Activated B cell treated with CpG ODN at 0.5 μM for 24 hours (primary cell): ENCODE measurements at regions of chr5 and their contacts with region 1.

Region 1: DNA sequence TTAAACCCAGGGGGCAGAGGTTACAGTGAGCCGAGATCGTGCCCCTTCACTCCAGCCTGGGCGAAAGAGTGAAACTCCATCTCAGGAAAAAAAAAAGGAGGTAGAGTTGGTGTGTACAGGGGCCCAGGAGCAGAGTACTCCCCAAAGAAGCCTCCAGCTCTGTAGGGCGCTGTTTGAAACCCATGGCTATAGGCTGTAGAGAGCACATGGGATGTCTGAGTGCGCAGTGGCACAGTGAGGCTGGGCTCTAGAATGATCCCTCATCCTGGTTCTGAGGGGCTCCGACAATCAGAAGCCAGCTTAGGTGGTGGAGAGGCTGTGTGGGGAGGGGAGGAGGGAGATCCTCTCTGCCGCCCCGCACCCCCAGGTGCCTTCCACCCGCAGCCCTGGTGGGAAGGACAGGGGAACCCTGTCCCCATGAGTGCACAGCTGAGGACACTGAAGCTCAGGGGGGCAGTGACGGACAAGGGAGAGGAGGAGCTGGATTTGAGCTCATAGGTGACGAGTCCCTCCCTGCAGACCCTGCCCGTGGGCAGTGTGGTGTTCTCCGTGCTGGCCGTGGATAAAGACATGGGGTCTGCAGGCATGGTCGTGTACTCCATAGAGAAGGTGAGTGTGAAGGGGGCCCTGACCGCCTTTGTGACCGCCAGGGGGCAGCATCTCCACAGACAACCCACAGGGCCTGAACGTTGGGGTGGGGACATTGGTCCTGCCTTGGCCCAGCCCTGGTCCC is 24.6 kb downstream of the CDHR2 start:
- DNase-seq: peak; percentile 75
- ATAC-seq: peak; percentile 86
- H3K4me3 Mint-ChIP-seq: no peak overlapping the region
- H3K27ac Mint-ChIP-seq: no peak overlapping the region
- H3K4me1 Mint-ChIP-seq: peaks cover 13% of the 10 kb centered on the region
- H3K27me3 Mint-ChIP-seq: peaks cover 8% of the 10 kb centered on the region
- CTCF ChIP-seq: peak; percentile 34

Region 2: GRCh38 chr5:175729829-175730277 is 843.9 kb before region 1 on chr5:
- CTCF ChIA-PET with region 1: no interaction called
- POLR2A ChIA-PET with region 1: no interaction called
- intact Hi-C with region 1: loop called (anchors 5 kb)
- DNase-seq: peak; percentile 74
- ATAC-seq: peak; percentile 71
- H3K4me3 Mint-ChIP-seq: no peak overlapping the region
- H3K27ac Mint-ChIP-seq: no peak overlapping the region
- H3K4me1 Mint-ChIP-seq: peaks cover 5% of the 10 kb centered on the region
- H3K27me3 Mint-ChIP-seq: peaks cover 46% of the 10 kb centered on the region
- CTCF ChIP-seq: no peak

Region 3: DNA sequence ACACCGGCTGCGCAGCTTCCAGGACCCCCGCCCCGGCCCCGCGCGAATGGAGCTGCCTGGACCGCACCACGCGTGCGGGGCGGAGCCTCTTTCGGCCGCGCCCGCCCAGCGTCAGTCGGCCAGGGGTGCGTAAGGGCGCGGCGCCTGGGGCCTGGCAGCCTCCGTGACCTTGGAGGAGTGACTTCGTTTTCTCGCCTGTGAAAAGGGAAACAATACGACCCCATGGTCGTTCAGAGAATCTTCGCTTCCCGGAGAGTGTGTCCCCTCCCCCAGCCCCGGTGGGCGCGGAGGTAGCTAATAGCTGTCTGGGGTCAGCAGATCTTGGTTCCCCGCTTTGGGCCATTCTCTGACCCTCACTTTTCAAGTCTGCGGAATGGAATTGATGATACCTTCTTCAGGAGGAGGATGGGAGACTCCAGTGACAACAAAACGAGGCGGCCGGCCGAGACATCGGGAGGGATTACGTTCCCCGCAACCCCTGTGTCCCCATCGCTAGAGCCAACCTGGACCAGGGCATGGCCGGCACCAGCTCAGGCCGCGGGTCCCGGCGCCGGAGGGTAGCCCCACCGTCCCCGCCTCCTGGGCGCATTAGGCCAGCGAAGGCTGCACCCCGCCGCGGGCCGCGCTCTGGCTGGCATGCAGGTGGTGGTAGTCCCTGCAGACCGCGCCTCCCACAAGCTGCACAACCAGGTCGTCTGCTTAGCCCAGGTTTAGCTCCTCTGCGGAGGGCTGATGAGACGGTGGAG is 30.1 kb before region 1 on chr5:
- CTCF ChIA-PET with region 1: no interaction called
- POLR2A ChIA-PET with region 1: no interaction called
- intact Hi-C with region 1: loop called (anchors 1 kb)
- DNase-seq: peak; percentile 76
- ATAC-seq: peak; percentile 80
- H3K4me3 Mint-ChIP-seq: peak overlapping the region; percentile 93
- H3K27ac Mint-ChIP-seq: peak overlapping the region; percentile 94
- H3K4me1 Mint-ChIP-seq: peaks cover 44% of the 10 kb centered on the region
- H3K27me3 Mint-ChIP-seq: no peaks in the 10 kb centered on the region
- CTCF ChIP-seq: no peak

Region 4: GRCh38 chr5:176619203-176619568 is 45.5 kb after region 1 on chr5:
- CTCF ChIA-PET with region 1: no interaction called
- POLR2A ChIA-PET with region 1: no interaction called
- intact Hi-C with region 1: loop called (anchors 1 kb)
- DNase-seq: peak; percentile 50
- ATAC-seq: peak; percentile 96
- H3K4me3 Mint-ChIP-seq: peak overlapping the region; percentile 24
- H3K27ac Mint-ChIP-seq: no peak overlapping the region
- H3K4me1 Mint-ChIP-seq: peaks cover 9% of the 10 kb centered on the region
- H3K27me3 Mint-ChIP-seq: peaks cover 57% of the 10 kb centered on the region
- CTCF ChIP-seq: no peak

Region 5: GRCh38 chr5:176959051-176959450 is 385.3 kb after region 1 on chr5:
- CTCF ChIA-PET with region 1: no interaction called
- POLR2A ChIA-PET with region 1: no interaction called
- intact Hi-C with region 1: loop called (anchors 2 kb)
- DNase-seq: no peak
- ATAC-seq: peak; percentile 28
- H3K4me3 Mint-ChIP-seq: no peak overlapping the region
- H3K27ac Mint-ChIP-seq: no peak overlapping the region
- H3K4me1 Mint-ChIP-seq: no peaks in the 10 kb centered on the region
- H3K27me3 Mint-ChIP-seq: no peaks in the 10 kb centered on the region
- CTCF ChIP-seq: no peak

Region 6: GRCh38 chr5:177049285-177049684 is 475.6 kb after region 1 on chr5:
- CTCF ChIA-PET with region 1: no interaction called
- POLR2A ChIA-PET with region 1: no interaction called
- intact Hi-C with region 1: no loop called
- DNase-seq: no peak
- ATAC-seq: no peak
- H3K4me3 Mint-ChIP-seq: no peak overlapping the region
- H3K27ac Mint-ChIP-seq: no peak overlapping the region
- H3K4me1 Mint-ChIP-seq: no peaks in the 10 kb centered on the region
- H3K27me3 Mint-ChIP-seq: no peaks in the 10 kb centered on the region
- CTCF ChIP-seq: no peak